AG04450 (cell line): ENCODE measurements at regions of chr19 and their contacts with region 1.

Region 1: DNA sequence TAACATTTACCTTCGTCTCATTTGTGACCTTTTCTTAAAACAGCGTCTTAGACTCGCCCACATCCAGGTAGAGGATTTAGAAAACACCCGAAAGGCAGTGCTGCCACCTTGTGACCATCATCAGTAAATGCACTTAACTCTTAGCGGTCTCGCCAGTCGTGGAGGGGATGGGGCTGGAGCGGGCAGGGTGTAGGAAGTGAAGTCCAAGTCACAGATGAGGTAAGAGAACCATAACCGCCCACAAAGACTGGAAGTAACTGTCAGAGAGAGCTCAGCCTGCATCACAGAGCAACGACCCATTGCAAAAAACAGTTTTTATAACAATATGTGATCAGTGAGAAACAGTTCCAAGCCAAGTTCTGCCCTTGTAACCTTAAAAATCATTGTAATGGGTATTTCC is 10.7 kb upstream of the CEACAM3 start:
- DNase-seq: peak; percentile 29
- H3K4me3 ChIP-seq: no peak overlapping the region
- H3K27ac ChIP-seq: no peak overlapping the region
- H3K27me3 ChIP-seq: peaks cover 8% of the 10 kb centered on the region
- CTCF ChIP-seq: peak; percentile 80

Region 2: GRCh38 chr19:41606215-41606837 is 179.3 kb before region 1 on chr19:
- CTCF ChIA-PET with region 1: no interaction called
- POLR2A ChIA-PET with region 1: no interaction called
- DNase-seq: no peak
- H3K4me3 ChIP-seq: no peak overlapping the region
- H3K27ac ChIP-seq: no peak overlapping the region
- H3K27me3 ChIP-seq: peaks cover 3% of the 10 kb centered on the region
- CTCF ChIP-seq: no peak

Region 3: GRCh38 chr19:41883821-41884733 is 98.4 kb after region 1 on chr19:
- CTCF ChIA-PET with region 1: no interaction called
- POLR2A ChIA-PET with region 1: interaction called, 13 read pairs
- DNase-seq: peak; percentile 92
- H3K4me3 ChIP-seq: peak overlapping the region; percentile 86
- H3K27ac ChIP-seq: peak overlapping the region; percentile 52
- H3K27me3 ChIP-seq: peaks cover 2% of the 10 kb centered on the region
- CTCF ChIP-seq: peak; percentile 28; the same call in 1 of the 2 replicates